ENCODE measurements at regions of chr12 and their contacts with region 1.

Region 1: DNA sequence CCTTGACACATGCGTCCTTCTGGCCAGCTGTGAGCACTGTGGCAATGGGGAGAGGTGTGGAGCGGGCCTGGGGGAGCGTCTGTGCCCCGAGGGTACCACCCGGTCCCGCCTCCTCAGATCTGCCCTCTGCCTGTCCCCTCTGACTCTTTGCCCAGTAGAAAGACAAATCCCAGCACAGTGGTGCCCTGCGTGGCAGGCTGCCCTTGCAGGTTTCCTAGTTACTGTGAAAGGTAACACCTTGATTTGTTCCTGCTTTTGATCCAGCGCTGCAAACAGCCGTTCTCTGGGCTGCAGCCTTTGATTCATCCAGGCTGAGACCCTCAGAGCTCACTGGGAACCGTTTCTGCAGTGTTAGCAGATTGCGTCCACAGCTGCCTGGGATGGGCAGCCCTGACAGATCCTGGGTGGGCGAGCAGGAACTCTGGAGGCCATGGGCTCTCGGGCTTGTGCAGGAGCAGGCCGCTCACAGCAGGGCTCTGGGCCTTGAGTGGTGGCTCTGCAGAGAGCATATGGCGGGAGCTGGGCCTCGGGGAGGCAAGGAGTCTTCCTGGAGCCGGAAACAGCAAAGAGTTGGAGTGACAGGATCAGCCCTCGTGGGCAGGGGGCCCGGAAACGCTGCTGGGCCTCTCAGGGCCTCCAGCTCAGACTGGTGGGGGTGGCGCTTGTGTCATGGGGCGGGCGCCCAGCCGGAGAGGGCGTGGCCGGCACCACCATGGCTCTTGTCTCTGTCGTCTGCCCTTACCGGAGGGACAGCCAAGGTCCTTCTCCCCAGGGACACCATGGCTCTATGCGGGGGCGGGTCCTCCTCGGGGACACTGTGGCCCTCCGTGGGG is 16.6 kb downstream of the FBRSL1 start:
- H3K4me3 Mint-ChIP-seq: peak overlapping the region; percentile 62
- H3K27ac Mint-ChIP-seq: peak overlapping the region; percentile 88
- H3K4me1 Mint-ChIP-seq: peaks cover 71% of the 10 kb centered on the region
- H3K27me3 Mint-ChIP-seq: peaks cover 25% of the 10 kb centered on the region

Region 2: GRCh38 chr12:132356691-132357622 is 149.6 kb before region 1 on chr12:
- intact Hi-C with region 1: no loop called
- H3K4me3 Mint-ChIP-seq: no peak overlapping the region
- H3K27ac Mint-ChIP-seq: no peak overlapping the region
- H3K4me1 Mint-ChIP-seq: no peaks in the 10 kb centered on the region
- H3K27me3 Mint-ChIP-seq: peaks cover 20% of the 10 kb centered on the region

Region 3: GRCh38 chr12:132489602-132490239 is 16.8 kb before region 1 on chr12 and contains the start of gene FBRSL1:
- intact Hi-C with region 1: loop called (anchors 1 kb)
- H3K4me3 Mint-ChIP-seq: peak within 1 kb of the TSS; percentile 87
- H3K27ac Mint-ChIP-seq: peak within 1 kb of the TSS; percentile 98
- H3K4me1 Mint-ChIP-seq: peaks cover 81% of the 10 kb centered on the region
- H3K27me3 Mint-ChIP-seq: peaks cover 7% of the 10 kb centered on the region

Measured in dendritic cell treated with granulocyte-macrophage colony-stimulating factor and Interleukin-4, amounts not matched to agents 40 ng/mL and 50 ng/mL, for 4 days (primary cell).